ENCODE measurements at regions of chr4 and their contacts with region 1.

Region 1: GRCh38 chr4:139642364-139642763 is 23.3 kb upstream of the MGST2 start:
- DNase-seq: no peak
- H3K4me3 ChIP-seq: no peak overlapping the region
- H3K27ac ChIP-seq: no peak overlapping the region
- H3K4me1 ChIP-seq: no peaks in the 10 kb centered on the region
- H3K27me3 ChIP-seq: no peaks in the 10 kb centered on the region
- CTCF ChIP-seq: no peak
- POLR2A ChIP-seq: no peak

Region 2: DNA sequence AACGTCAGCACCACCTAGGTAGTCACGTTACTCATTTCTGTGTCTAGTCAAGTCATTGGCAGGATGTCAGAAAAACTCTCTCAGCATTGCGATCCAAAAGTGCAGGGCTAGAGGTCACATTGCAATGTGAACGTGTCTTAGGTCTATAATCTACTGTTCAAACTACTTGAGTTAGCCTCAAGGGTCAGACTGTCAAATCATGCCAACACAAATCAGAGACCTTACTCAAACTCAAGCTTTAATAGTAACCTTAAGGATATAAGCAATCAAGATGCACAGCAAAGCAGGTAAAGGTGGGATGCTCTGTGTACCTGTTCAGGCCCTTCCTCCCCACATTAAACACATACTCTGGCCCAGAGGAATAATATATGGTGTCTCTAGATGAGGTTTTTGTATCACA is 741.2 kb before region 1 on chr4:
- intact Hi-C with region 1: loop called (anchors 5 kb)
- DNase-seq: no peak
- H3K4me3 ChIP-seq: no peak overlapping the region
- H3K27ac ChIP-seq: no peak overlapping the region
- H3K4me1 ChIP-seq: no peaks in the 10 kb centered on the region
- H3K27me3 ChIP-seq: no peaks in the 10 kb centered on the region
- CTCF ChIP-seq: no peak
- POLR2A ChIP-seq: no peak

Region 3: GRCh38 chr4:139550724-139551429 is 91.5 kb before region 1 on chr4:
- intact Hi-C with region 1: no loop called
- DNase-seq: no peak
- H3K4me3 ChIP-seq: no peak overlapping the region
- H3K27ac ChIP-seq: peak overlapping the region; percentile 13 to 23
- H3K4me1 ChIP-seq: peaks cover 0 to 11% of the 10 kb centered on the region in 2 donors
- H3K27me3 ChIP-seq: no peaks in the 10 kb centered on the region
- CTCF ChIP-seq: no peak
- POLR2A ChIP-seq: no peak

Region 4: DNA sequence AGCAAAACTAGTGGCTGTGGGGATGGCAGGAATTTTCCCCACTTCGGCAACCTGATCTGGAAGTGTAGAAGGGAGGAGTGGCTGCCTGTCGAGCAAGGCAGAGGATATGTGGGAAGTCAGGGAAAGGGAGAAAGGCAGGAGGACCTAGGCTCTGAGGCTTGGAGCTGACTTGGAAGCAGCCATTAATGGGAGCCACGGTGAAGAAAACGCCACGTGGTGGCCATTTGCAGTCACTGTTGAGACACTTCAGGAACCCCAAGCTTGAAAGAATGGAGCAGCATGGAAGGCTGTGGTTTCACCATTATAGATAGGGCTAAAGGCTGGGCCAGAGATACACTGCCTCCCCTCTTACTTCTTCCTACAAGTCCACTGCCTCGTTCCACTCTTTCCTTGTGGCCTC is 553.4 kb after region 1 on chr4:
- intact Hi-C with region 1: loop called (anchors 10 kb)
- DNase-seq: no peak
- H3K4me3 ChIP-seq: no peak overlapping the region
- H3K27ac ChIP-seq: no peak overlapping the region
- H3K4me1 ChIP-seq: no peaks in the 10 kb centered on the region
- H3K27me3 ChIP-seq: no peaks in the 10 kb centered on the region
- CTCF ChIP-seq: no peak
- POLR2A ChIP-seq: no peak